Right ventricle myocardium inferior (tissue), 1 donor: ENCODE measurements at regions of chrX and their contacts with region 1.

Region 1: DNA sequence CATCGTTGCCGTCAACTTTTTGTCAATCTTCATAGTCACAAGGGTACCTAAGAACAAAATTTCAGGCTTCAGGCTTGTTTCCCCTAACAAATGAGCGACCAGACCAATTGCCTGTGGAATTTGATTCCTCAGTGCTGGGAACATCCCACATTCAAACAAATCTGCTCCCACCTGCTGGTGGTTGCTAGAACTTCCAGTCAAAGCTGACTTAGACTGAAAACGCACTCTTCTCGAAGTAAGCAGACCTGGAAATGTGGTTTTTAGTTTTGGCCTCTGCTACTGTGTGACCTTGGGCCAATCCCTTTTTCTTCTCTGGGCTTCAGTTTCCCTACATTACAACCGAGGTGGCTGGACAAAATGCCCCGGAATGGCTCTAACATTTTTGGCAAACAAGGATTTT is 1.8 kb upstream of the GABRQ start:
- DNase-seq: no peak
- ATAC-seq: no peak

Region 2: DNA sequence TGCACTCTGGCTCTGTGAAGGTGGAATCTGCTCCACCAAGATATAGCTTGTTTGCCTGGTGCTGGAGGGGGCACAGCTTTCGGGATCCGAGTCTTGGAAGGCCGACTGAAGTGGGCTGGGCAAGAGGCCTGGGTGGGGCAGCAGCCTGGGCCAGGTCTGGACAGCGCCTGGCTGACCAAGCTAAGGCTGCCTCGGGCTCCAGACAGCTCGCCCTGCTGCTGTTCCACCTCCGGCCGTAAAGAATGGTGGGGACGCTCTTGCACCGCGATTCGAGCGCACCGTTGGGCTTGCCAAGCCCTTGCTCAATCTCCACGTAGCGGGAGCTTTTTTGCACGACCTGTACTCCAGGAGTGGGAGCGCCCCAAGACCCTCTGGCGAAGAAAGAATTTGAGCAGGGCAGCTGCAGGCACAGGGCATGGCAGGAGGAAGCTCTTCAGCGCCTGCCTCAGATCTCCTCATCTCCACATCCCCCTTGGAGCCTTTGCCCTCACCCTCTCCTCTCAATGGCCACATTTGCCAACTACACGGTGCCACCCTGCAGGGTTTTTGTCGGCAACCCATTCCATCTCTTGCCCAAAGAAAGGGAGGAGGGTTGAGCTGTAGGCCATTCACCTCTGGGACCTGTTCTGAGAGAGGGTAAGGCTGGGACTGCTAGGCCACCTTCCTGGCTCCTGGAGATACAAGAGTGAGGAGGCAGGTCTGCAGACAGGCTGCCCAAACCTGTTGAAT is 882.5 kb before region 1 on chrX:
- intact Hi-C with region 1: loop called (anchors 2 kb)
- DNase-seq: no peak
- ATAC-seq: peak; percentile 84

Region 3: DNA sequence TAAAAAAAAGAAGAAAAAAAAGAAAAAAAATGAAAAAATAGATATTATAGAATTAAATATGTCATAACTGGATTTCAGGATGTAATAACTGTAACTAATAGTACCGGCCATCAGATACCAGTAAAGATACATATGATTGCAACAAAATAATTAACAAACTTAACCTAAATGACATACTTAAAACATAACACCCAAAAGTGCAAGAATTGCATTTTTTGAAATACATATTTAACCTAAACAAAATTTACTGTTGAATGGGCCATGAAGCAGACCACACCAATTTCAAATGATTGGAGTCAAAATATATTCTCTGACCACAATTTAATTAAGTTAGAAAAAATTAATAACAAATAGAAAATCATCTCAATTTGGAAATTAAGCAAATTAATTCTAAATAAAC is 217.9 kb before region 1 on chrX:
- intact Hi-C with region 1: no loop called
- DNase-seq: no peak
- ATAC-seq: no peak